Activated CD8-positive, alpha-beta memory T cell treated with anti-CD3 and anti-CD28 coated beads, Interleukin-2, amount 10 ng/mL, durations not matched to agents 7 days and 5 days (primary cell): ENCODE measurements at regions of chr6 and their contacts with region 1.

Region 1: GRCh38 chr6:149925974-149926777 is 3.3 kb upstream of the RAET1G start:
- DNase-seq: peak; percentile 90
- ATAC-seq: peak; percentile 76
- H3K4me3 Mint-ChIP-seq: peak overlapping the region; percentile 57
- H3K27ac Mint-ChIP-seq: no peak overlapping the region
- H3K4me1 Mint-ChIP-seq: peaks cover 26% of the 10 kb centered on the region
- H3K27me3 Mint-ChIP-seq: peaks cover 92% of the 10 kb centered on the region

Region 2: DNA sequence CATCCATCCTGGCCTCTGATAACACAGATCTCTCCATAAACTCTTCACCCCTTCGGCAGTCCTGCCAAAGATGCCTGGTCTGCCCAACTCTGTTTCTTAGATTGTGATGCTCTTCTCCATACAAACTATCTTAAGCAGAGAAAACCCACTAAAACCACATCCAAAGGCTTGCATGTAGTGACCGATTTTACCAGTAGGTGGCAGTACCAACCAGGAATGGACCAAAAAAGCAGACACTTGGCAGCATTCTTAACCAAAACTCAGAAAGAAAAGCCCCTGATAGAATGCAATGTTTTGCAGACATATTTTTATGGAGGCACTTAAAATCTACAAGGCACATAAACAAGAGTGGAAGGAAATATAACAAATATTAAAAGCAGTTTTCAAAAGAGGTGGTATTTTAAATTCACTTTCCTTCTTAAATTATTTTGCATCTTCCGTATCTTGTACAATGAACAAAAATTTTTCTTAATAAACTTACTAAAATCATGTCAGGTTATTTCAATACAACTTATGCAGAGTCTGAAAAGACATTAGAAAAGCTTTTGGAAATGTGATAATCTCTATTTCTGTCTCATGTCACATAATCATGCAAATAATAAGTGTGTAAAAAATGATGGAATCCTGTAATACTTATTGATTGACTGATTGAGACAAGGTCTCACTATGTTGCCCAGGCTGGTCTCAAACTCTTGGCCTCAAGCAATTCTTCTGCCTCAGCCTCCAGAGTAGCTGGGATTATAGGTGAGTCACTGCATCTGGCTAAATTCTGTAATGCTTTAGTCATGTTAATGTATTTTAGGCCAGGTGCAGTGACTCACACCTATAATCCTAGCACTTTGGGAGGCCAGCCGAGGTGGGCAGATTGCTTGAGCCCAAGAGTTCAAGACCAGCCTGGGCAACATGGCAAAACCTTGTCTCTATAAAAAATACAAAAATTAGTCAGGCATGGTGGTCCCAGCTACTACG is 91.4 kb before region 1 on chr6:
- CTCF ChIA-PET with region 1: interaction called, 15 read pairs
- DNase-seq: peak; percentile 79
- ATAC-seq: peak; percentile 47
- H3K4me3 Mint-ChIP-seq: no peak overlapping the region
- H3K27ac Mint-ChIP-seq: no peak overlapping the region
- H3K4me1 Mint-ChIP-seq: peaks cover 2% of the 10 kb centered on the region
- H3K27me3 Mint-ChIP-seq: peaks cover 13% of the 10 kb centered on the region

Region 3: GRCh38 chr6:149840345-149841075 is 85.7 kb before region 1 on chr6:
- CTCF ChIA-PET with region 1: interaction called, 15 read pairs
- DNase-seq: peak; percentile 70
- ATAC-seq: peak; percentile 80
- H3K4me3 Mint-ChIP-seq: no peak overlapping the region
- H3K27ac Mint-ChIP-seq: no peak overlapping the region
- H3K4me1 Mint-ChIP-seq: no peaks in the 10 kb centered on the region
- H3K27me3 Mint-ChIP-seq: peaks cover 19% of the 10 kb centered on the region

Region 4: GRCh38 chr6:149890629-149891045 is 35.5 kb before region 1 on chr6:
- CTCF ChIA-PET with region 1: no interaction called
- DNase-seq: no peak
- ATAC-seq: no peak
- H3K4me3 Mint-ChIP-seq: no peak overlapping the region
- H3K27ac Mint-ChIP-seq: no peak overlapping the region
- H3K4me1 Mint-ChIP-seq: peaks cover 7% of the 10 kb centered on the region
- H3K27me3 Mint-ChIP-seq: peaks cover 40% of the 10 kb centered on the region

Region 5: DNA sequence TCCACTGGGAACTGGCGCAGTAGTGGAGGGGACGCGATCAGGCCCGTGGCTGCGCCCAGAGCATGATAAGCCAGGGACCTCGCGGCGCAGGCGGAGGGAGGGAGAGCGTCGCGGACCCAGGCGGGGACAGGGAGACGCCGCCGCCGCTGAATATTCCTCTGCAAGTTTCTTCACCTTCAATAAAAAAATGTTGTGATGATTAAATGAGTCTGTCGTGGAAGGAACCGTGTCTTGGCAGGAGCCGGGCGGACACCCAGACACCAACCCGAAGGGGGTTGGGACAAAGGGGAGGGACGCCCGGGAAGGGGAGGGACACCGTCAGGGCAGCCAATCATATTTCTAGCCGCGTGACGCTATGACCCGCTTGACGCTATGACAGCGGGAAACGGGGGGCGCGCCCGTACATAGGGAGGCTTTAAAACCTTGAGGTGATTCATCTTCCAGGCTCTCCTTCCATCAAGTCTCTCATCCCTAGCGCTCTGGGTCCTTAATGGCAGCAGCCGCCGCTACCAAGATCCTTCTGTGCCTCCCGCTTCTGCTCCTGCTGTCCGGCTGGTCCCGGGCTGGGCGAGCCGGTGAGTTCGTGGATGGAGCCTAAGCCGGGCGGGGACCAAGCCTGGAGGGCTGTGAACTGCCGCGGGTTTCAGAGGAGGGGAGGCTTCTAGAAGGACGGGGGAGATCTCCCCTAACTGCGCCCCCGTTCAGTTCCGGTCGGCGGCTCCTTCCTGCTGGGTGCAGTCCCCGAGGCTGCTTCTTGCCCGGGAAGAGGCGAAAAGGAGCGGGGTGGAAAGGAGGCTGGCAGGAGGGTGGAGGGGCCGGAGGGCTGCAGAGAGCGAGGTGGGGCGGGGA is 15.6 kb after region 1 on chr6 and contains the start of gene ULBP2:
- CTCF ChIA-PET with region 1: no interaction called
- DNase-seq: peak; percentile 92
- ATAC-seq: peak; percentile 93
- H3K4me3 Mint-ChIP-seq: peak within 1 kb of the TSS; percentile 84
- H3K27ac Mint-ChIP-seq: peak within 1 kb of the TSS; percentile 81
- H3K4me1 Mint-ChIP-seq: peaks cover 38% of the 10 kb centered on the region
- H3K27me3 Mint-ChIP-seq: peaks cover 78% of the 10 kb centered on the region
- total RNA-seq, gene ULBP2: 0.80 to 0.99 TPM

Region 6: DNA sequence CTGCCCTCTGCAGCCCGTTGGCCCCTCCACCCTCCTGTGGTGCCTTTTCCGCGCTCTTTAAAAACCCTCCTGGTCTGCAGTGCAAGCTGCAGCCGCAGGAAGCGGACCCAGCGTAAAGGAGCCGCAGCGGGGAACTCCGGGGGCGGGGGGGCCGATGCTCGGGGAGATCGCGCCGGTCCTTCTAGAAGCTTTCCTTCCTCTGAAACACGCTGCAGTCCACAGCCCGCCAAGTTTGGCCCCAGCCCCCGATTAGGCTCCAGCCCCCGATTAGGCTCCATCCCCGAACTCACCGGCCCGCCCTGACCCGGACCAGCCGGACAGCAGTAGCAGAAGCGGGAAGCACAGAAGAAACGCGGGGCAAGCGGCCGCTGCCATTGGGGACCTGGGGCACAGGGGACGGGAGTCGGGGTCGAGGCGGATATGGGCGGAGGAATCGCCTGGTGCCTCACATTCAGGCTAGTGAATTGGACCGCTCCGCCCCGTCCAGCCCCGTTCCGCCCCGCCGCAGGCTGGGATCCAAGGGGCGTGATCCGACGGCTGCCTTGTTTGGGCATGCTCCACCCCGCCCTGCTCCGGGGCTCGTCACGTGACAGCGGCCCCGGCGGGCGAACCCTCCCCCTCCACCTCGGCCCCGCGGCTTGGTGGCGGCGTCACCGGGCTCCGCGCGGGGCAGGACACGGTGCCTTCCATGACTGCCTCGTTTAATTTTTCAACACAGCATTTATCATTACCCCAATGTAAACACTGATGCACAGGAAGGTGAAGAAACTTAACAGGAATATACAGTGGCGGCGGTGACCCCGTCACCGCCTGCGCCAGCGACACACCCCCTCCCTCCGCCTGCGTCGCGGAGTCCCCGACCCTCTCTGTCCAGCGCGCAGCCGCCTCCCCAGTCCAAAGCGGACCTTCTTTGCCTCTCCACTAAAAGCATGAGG is 78.9 kb after region 1 on chr6:
- CTCF ChIA-PET with region 1: no interaction called
- DNase-seq: peak; percentile 97
- ATAC-seq: peak; percentile 91
- H3K4me3 Mint-ChIP-seq: peak overlapping the region; percentile 81
- H3K27ac Mint-ChIP-seq: peak overlapping the region; percentile 91
- H3K4me1 Mint-ChIP-seq: peaks cover 55% of the 10 kb centered on the region
- H3K27me3 Mint-ChIP-seq: peaks cover 30% of the 10 kb centered on the region